ENCODE measurements at regions of chr19 and their contacts with region 1.

Region 1: GRCh38 chr19:37906869-37907734 is at the start of gene SIPA1L3:
- DNase-seq: peak; percentile 95
- CTCF ChIP-seq: no peak

Region 2: GRCh38 chr19:38049105-38049649 is 142.1 kb after region 1 on chr19:
- in situ Hi-C with region 1: loop called (anchors 25 kb)
- DNase-seq: peak; percentile 82
- CTCF ChIP-seq: no peak